Mammary epithelial cell (primary cell): ENCODE measurements at regions of chr7 and their contacts with region 1.

Region 1: GRCh38 chr7:41189866-41190265 is 513.0 kb downstream of the INHBA start:
- DNase-seq: peak; percentile 97
- H3K4me3 ChIP-seq: no peak overlapping the region
- H3K27ac ChIP-seq: peak overlapping the region; percentile 99
- H3K4me1 ChIP-seq: peaks cover 38% of the 10 kb centered on the region
- H3K27me3 ChIP-seq: no peaks in the 10 kb centered on the region
- CTCF ChIP-seq: no peak

Region 2: GRCh38 chr7:41045556-41046123 is 144.2 kb before region 1 on chr7:
- CTCF ChIA-PET with region 1: no interaction called
- dilution Hi-C with region 1: no loop called
- in situ Hi-C with region 1: no loop called
- intact Hi-C with region 1: loop called (anchors 5 kb)
- DNase-seq: peak; percentile 70
- H3K4me3 ChIP-seq: no peak overlapping the region
- H3K27ac ChIP-seq: no peak overlapping the region
- H3K4me1 ChIP-seq: peaks cover 16% of the 10 kb centered on the region
- H3K27me3 ChIP-seq: no peaks in the 10 kb centered on the region
- CTCF ChIP-seq: peak; percentile 71 to 88

Region 3: DNA sequence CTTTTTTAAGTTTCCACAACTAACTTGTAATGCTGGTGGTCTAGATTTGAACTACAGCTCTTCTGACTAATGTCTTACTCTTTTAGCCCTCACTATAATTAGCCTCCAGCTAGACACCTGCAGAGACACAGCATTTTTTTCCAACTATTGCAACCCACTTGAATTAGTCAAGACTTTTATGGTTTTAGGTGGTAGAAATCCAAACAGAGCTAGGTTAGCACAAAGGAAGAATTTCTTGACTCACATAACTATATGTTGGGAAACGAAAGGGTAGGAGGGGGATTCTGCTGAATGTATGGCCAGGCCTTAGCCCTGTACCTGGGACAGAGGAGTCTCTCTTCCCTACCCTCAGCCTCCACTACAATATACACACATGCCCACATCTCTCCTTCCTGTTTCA is 73.0 kb before region 1 on chr7:
- CTCF ChIA-PET with region 1: no interaction called
- dilution Hi-C with region 1: no loop called
- in situ Hi-C with region 1: no loop called
- intact Hi-C with region 1: loop called (anchors 2 kb)
- DNase-seq: peak; percentile 96
- H3K4me3 ChIP-seq: no peak overlapping the region
- H3K27ac ChIP-seq: peak overlapping the region; percentile 100
- H3K4me1 ChIP-seq: peaks cover 48% of the 10 kb centered on the region
- H3K27me3 ChIP-seq: no peaks in the 10 kb centered on the region
- CTCF ChIP-seq: no peak

Region 4: GRCh38 chr7:41130561-41131236 is 59.2 kb before region 1 on chr7:
- CTCF ChIA-PET with region 1: no interaction called
- dilution Hi-C with region 1: no loop called
- in situ Hi-C with region 1: no loop called
- intact Hi-C with region 1: no loop called
- DNase-seq: no peak
- H3K4me3 ChIP-seq: no peak overlapping the region
- H3K27ac ChIP-seq: no peak overlapping the region
- H3K4me1 ChIP-seq: peaks cover 15% of the 10 kb centered on the region
- H3K27me3 ChIP-seq: no peaks in the 10 kb centered on the region
- CTCF ChIP-seq: no peak

Region 5: DNA sequence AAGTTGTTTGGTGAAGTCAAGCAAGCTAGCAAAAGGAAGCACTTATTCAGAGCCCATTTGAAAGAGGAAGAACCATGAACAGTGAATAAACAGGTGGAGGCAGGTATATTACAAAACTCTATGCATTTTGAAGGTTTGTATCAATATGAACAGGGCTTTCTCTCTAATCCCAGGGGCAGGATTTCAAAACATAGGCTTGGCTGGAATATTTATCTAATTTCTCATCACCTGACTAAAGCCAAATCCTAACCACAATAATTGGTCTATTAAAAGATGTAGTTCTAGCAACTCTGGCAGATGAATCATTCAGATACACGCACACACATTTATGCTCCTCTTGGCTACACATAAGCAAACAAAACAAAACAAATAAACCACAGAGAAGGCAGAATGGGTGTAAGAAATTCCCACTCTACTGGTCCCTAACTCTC is 41.3 kb before region 1 on chr7:
- CTCF ChIA-PET with region 1: no interaction called
- dilution Hi-C with region 1: no loop called
- in situ Hi-C with region 1: no loop called
- intact Hi-C with region 1: loop called (anchors 1 kb)
- DNase-seq: peak; percentile 98
- H3K4me3 ChIP-seq: no peak overlapping the region
- H3K27ac ChIP-seq: peak overlapping the region; percentile 99
- H3K4me1 ChIP-seq: peaks cover 46% of the 10 kb centered on the region
- H3K27me3 ChIP-seq: no peaks in the 10 kb centered on the region
- CTCF ChIP-seq: no peak

Region 6: GRCh38 chr7:41162612-41163011 is 27.3 kb before region 1 on chr7:
- CTCF ChIA-PET with region 1: no interaction called
- dilution Hi-C with region 1: no loop called
- in situ Hi-C with region 1: no loop called
- intact Hi-C with region 1: no loop called
- DNase-seq: no peak
- H3K4me3 ChIP-seq: no peak overlapping the region
- H3K27ac ChIP-seq: no peak overlapping the region
- H3K4me1 ChIP-seq: no peaks in the 10 kb centered on the region
- H3K27me3 ChIP-seq: no peaks in the 10 kb centered on the region
- CTCF ChIP-seq: no peak

Region 7: DNA sequence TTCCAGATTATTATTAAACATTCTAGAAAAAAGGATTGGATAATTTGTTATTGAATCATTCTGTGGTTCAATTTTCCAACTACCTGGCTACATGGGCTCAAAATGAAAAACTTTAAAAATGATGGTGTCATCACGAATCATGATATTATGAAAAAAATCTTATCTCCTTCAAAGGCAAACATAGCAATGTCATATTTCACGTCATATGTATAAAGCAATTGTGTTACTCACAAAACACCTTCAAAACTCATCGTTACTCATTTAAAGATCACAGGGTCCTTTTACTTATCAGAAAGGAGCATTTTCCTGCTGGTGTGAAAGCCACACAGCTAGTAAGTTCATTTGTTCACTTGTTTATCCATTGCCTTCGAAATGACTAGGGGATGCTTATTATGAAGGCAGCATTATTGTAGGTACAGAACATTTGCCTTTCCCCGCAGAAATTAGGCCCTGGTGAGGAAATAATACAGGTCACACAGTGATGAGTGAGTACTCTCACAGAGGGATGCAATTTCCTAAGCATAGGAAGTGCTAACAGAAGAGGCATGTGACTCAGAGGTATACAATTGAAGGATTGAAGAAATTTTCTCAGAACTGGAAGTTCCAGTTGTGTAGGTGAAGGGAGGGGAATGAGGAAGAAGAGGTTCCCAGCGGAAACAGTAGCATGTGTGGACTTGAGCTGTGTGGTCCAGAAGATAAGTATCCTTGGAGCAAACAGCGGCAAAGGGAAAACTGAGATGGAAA is 34.4 kb after region 1 on chr7:
- CTCF ChIA-PET with region 1: no interaction called
- dilution Hi-C with region 1: no loop called
- in situ Hi-C with region 1: no loop called
- intact Hi-C with region 1: loop called (anchors 1 kb)
- DNase-seq: peak; percentile 98
- H3K4me3 ChIP-seq: no peak overlapping the region
- H3K27ac ChIP-seq: peak overlapping the region; percentile 93
- H3K4me1 ChIP-seq: peaks cover 32% of the 10 kb centered on the region
- H3K27me3 ChIP-seq: no peaks in the 10 kb centered on the region
- CTCF ChIP-seq: no peak

Region 8: GRCh38 chr7:41247143-41247865 is 57.4 kb after region 1 on chr7:
- CTCF ChIA-PET with region 1: no interaction called
- dilution Hi-C with region 1: no loop called
- in situ Hi-C with region 1: no loop called
- intact Hi-C with region 1: loop called (anchors 5 kb)
- DNase-seq: peak; percentile 97
- H3K4me3 ChIP-seq: no peak overlapping the region
- H3K27ac ChIP-seq: peak overlapping the region; percentile 93
- H3K4me1 ChIP-seq: peaks cover 25% of the 10 kb centered on the region
- H3K27me3 ChIP-seq: no peaks in the 10 kb centered on the region
- CTCF ChIP-seq: no peak

Region 9: GRCh38 chr7:41696314-41696916 is 506.5 kb after region 1 on chr7:
- CTCF ChIA-PET with region 1: no interaction called
- dilution Hi-C with region 1: no loop called
- in situ Hi-C with region 1: no loop called
- intact Hi-C with region 1: loop called (anchors 1 kb)
- DNase-seq: peak; percentile 85
- H3K4me3 ChIP-seq: peak overlapping the region; percentile 70 to 92 (median 89)
- H3K27ac ChIP-seq: peak overlapping the region; percentile 87
- H3K4me1 ChIP-seq: peaks cover 29% of the 10 kb centered on the region
- H3K27me3 ChIP-seq: no peaks in the 10 kb centered on the region
- CTCF ChIP-seq: peak; percentile 47 to 73